ENCODE measurements at regions of chr6 and their contacts with region 1.

Region 1: GRCh38 chr6:149863697-149864577 is at the start of gene LRP11:
- DNase-seq: peak; percentile 80
- ATAC-seq: peak; percentile 91
- H3K4me3 Mint-ChIP-seq: peak within 1 kb of the TSS; percentile 81
- H3K27ac Mint-ChIP-seq: no peak within 1 kb of the TSS
- H3K4me1 Mint-ChIP-seq: peaks cover 14% of the 10 kb centered on the region
- H3K27me3 Mint-ChIP-seq: peaks cover 30% of the 10 kb centered on the region
- CTCF ChIP-seq: no peak
- total RNA-seq, gene LRP11: 0.29 TPM in 2 replicates

Region 2: GRCh38 chr6:148989585-148989984 is 874.4 kb before region 1 on chr6:
- CTCF ChIA-PET with region 1: no interaction called
- POLR2A ChIA-PET with region 1: no interaction called
- intact Hi-C with region 1: no loop called
- DNase-seq: no peak
- ATAC-seq: no peak
- H3K4me3 Mint-ChIP-seq: no peak overlapping the region
- H3K27ac Mint-ChIP-seq: no peak overlapping the region
- H3K4me1 Mint-ChIP-seq: peaks cover 45% of the 10 kb centered on the region
- H3K27me3 Mint-ChIP-seq: no peaks in the 10 kb centered on the region
- CTCF ChIP-seq: no peak

Region 3: DNA sequence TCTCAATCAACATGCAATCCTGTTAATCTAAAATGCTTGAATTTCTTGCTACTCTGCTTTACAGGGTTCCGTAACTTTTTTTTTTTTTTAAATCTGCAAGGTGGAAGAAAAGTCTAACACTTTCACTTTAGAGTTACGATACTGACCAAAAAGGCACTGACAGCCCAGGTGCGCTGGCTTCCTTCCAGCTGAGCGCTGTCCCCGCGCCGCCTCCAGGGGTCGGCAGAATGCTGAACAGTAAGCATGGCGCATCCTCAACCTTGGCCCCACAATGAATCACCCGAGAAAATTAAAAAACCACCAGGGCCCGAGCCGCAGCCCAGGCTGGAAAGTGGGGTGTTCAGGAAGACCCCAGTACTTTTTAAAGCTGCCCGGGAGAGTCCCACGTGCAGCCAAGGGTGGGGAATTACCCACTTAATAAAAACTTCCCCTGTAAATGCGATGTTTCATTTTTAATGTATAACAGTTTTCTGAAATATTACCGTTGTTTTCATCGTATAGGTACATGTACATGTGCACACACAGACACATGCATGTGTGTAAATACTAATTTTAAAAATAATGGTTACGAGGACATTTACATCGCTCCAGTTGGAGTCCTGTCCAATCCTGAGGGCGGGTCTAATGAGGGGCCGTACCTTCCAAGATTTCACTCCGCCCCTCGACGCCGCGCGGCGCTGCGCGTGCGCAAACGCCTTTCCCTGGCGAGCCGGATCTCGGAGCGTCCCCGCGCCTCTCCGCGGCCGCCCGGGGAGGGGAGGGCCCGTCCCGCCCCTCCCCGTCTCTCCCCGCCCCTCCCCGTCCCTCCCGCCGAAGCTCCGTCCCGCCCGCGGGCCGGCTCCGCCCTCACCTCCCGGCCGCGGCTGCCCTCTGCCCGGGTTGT is 298.2 kb before region 1 on chr6 and contains the start of gene GINM1:
- CTCF ChIA-PET with region 1: no interaction called
- POLR2A ChIA-PET with region 1: no interaction called
- intact Hi-C with region 1: loop called (anchors 2 kb)
- DNase-seq: peak; percentile 97
- ATAC-seq: peak; percentile 85
- H3K4me3 Mint-ChIP-seq: peak within 1 kb of the TSS; percentile 93
- H3K27ac Mint-ChIP-seq: peak within 1 kb of the TSS; percentile 92
- H3K4me1 Mint-ChIP-seq: peaks cover 22% of the 10 kb centered on the region
- H3K27me3 Mint-ChIP-seq: no peaks in the 10 kb centered on the region
- CTCF ChIP-seq: no peak
- total RNA-seq, gene GINM1: 15.4 and 18.0 TPM in 2 replicates

Region 4: DNA sequence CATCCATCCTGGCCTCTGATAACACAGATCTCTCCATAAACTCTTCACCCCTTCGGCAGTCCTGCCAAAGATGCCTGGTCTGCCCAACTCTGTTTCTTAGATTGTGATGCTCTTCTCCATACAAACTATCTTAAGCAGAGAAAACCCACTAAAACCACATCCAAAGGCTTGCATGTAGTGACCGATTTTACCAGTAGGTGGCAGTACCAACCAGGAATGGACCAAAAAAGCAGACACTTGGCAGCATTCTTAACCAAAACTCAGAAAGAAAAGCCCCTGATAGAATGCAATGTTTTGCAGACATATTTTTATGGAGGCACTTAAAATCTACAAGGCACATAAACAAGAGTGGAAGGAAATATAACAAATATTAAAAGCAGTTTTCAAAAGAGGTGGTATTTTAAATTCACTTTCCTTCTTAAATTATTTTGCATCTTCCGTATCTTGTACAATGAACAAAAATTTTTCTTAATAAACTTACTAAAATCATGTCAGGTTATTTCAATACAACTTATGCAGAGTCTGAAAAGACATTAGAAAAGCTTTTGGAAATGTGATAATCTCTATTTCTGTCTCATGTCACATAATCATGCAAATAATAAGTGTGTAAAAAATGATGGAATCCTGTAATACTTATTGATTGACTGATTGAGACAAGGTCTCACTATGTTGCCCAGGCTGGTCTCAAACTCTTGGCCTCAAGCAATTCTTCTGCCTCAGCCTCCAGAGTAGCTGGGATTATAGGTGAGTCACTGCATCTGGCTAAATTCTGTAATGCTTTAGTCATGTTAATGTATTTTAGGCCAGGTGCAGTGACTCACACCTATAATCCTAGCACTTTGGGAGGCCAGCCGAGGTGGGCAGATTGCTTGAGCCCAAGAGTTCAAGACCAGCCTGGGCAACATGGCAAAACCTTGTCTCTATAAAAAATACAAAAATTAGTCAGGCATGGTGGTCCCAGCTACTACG is 29.1 kb before region 1 on chr6:
- CTCF ChIA-PET with region 1: interaction called, 25 read pairs
- POLR2A ChIA-PET with region 1: no interaction called
- intact Hi-C with region 1: loop called (anchors 1 kb)
- DNase-seq: peak; percentile 25
- ATAC-seq: peak; percentile 56
- H3K4me3 Mint-ChIP-seq: no peak overlapping the region
- H3K27ac Mint-ChIP-seq: no peak overlapping the region
- H3K4me1 Mint-ChIP-seq: no peaks in the 10 kb centered on the region
- H3K27me3 Mint-ChIP-seq: peaks cover 13% of the 10 kb centered on the region
- CTCF ChIP-seq: peak; percentile 88

Region 5: DNA sequence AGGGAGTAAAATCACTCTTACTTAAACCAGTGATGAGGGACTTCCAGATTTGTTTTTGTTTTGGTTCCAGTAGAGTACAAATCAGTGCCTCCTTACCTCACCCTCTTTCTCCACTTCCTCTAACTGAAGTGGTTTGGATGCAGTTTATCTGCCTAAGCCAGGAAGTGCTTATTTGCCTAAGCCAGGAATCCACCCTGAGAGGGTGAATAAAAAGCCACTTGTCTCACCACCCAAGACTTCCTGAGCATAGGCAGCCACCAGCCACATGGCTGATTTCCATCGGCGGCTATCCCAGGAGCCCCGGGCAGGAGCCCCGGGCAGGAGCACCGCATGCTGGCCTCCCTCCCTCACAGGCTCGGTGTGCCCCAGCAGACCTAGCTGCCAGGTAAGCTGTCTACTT is 11.8 kb before region 1 on chr6:
- CTCF ChIA-PET with region 1: interaction called, 3 read pairs
- POLR2A ChIA-PET with region 1: interaction called, 3 read pairs
- intact Hi-C with region 1: loop called (anchors 1 kb)
- DNase-seq: no peak
- ATAC-seq: peak; percentile 91
- H3K4me3 Mint-ChIP-seq: peak overlapping the region; percentile 44
- H3K27ac Mint-ChIP-seq: peak overlapping the region; percentile 42
- H3K4me1 Mint-ChIP-seq: peaks cover 25% of the 10 kb centered on the region
- H3K27me3 Mint-ChIP-seq: no peaks in the 10 kb centered on the region
- CTCF ChIP-seq: no peak

Region 6: GRCh38 chr6:149876241-149876933 is 12.4 kb after region 1 on chr6:
- CTCF ChIA-PET with region 1: no interaction called
- POLR2A ChIA-PET with region 1: no interaction called
- intact Hi-C with region 1: no loop called
- DNase-seq: no peak
- ATAC-seq: no peak
- H3K4me3 Mint-ChIP-seq: no peak overlapping the region
- H3K27ac Mint-ChIP-seq: no peak overlapping the region
- H3K4me1 Mint-ChIP-seq: no peaks in the 10 kb centered on the region
- H3K27me3 Mint-ChIP-seq: peaks cover 48% of the 10 kb centered on the region
- CTCF ChIP-seq: no peak

Region 7: DNA sequence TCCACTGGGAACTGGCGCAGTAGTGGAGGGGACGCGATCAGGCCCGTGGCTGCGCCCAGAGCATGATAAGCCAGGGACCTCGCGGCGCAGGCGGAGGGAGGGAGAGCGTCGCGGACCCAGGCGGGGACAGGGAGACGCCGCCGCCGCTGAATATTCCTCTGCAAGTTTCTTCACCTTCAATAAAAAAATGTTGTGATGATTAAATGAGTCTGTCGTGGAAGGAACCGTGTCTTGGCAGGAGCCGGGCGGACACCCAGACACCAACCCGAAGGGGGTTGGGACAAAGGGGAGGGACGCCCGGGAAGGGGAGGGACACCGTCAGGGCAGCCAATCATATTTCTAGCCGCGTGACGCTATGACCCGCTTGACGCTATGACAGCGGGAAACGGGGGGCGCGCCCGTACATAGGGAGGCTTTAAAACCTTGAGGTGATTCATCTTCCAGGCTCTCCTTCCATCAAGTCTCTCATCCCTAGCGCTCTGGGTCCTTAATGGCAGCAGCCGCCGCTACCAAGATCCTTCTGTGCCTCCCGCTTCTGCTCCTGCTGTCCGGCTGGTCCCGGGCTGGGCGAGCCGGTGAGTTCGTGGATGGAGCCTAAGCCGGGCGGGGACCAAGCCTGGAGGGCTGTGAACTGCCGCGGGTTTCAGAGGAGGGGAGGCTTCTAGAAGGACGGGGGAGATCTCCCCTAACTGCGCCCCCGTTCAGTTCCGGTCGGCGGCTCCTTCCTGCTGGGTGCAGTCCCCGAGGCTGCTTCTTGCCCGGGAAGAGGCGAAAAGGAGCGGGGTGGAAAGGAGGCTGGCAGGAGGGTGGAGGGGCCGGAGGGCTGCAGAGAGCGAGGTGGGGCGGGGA is 77.9 kb after region 1 on chr6 and contains the start of gene ULBP2:
- CTCF ChIA-PET with region 1: no interaction called
- POLR2A ChIA-PET with region 1: no interaction called
- intact Hi-C with region 1: loop called (anchors 5 kb)
- DNase-seq: peak; percentile 53
- ATAC-seq: peak; percentile 70
- H3K4me3 Mint-ChIP-seq: peak within 1 kb of the TSS; percentile 89
- H3K27ac Mint-ChIP-seq: peak within 1 kb of the TSS; percentile 73
- H3K4me1 Mint-ChIP-seq: peaks cover 43% of the 10 kb centered on the region
- H3K27me3 Mint-ChIP-seq: peaks cover 46% of the 10 kb centered on the region
- CTCF ChIP-seq: no peak
- total RNA-seq, gene ULBP2: 0.29 and 0.37 TPM in 2 replicates

Measured in activated B cell treated with CpG ODN at 0.5 μM for 24 hours (primary cell).